Dorsolateral prefrontal cortex (tissue), 120 donors: ENCODE measurements at regions of chr9 and their contacts with region 1.

Region 1: GRCh38 chr9:133184962-133185361 is 21.2 kb upstream of the GBGT1 start:
- DNase-seq: peak in 4 of 10 donors; percentile 27 to 74 (median 44)
- H3K4me3 ChIP-seq: peak overlapping the region in 1 of 59 donors; percentile 7
- H3K27ac ChIP-seq: no peak overlapping the region
- H3K27me3 ChIP-seq: peaks cover 0 to 5% (median 0%) of the 10 kb centered on the region in 45 donors
- CTCF ChIP-seq: peak; percentile 51 to 78 (median 66)

Region 2: GRCh38 chr9:133327834-133328484 is 143.0 kb after region 1 on chr9:
- intact Hi-C with region 1: loop called (anchors 1 to 5 kb)
- DNase-seq: peak in 3 of 10 donors; percentile 13 to 31 (median 23)
- H3K4me3 ChIP-seq: no peak overlapping the region
- H3K27ac ChIP-seq: no peak overlapping the region
- H3K27me3 ChIP-seq: no peaks in the 10 kb centered on the region
- CTCF ChIP-seq: no peak

Region 3: DNA sequence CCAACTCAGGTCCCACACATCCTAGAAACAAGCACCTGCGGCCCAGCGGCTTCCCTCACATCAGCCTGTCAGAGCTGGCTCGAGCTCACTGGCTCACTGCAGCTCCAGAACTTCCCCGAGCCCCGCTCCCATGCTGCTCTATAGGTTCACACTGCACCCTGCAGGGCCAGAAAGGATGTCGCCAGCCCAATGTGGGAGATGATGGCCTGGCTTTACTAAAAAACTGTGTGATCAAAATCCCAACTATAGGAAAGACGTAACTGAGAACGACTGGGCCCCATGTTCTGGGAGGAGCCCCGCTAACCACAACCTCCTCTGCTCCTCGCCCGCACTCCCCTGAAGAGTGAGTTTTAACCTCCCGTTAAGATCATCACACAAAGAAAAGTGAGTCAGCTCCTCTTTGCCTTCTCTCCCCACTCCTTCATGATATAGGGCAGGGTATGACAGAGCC is 186.3 kb after region 1 on chr9:
- intact Hi-C with region 1: no loop called
- DNase-seq: no peak
- H3K4me3 ChIP-seq: peak overlapping the region in 5 of 59 donors; percentile 1 to 16 (median 6)
- H3K27ac ChIP-seq: peak overlapping the region in 5 of 59 donors; percentile 9 to 54 (median 36)
- H3K27me3 ChIP-seq: no peaks in the 10 kb centered on the region
- CTCF ChIP-seq: no peak

Region 4: GRCh38 chr9:133737774-133738639 is 553.0 kb after region 1 on chr9 and contains the start of gene SARDH:
- intact Hi-C with region 1: loop called in 1 of 2 experiments (anchors 10 kb)
- DNase-seq: peak in 2 of 10 donors; percentile 20 to 46
- H3K4me3 ChIP-seq: peak within 1 kb of the TSS in 49 of 59 donors; percentile 10 to 59 (median 36)
- H3K27ac ChIP-seq: no peak within 1 kb of the TSS
- H3K27me3 ChIP-seq: peaks cover 0 to 6% (median 0%) of the 10 kb centered on the region in 45 donors
- CTCF ChIP-seq: no peak
- total RNA-seq, gene SARDH: 2.4 to 13.2 (median 6.0) TPM